ENCODE measurements at regions of chr3 and their contacts with region 1.

Region 1: DNA sequence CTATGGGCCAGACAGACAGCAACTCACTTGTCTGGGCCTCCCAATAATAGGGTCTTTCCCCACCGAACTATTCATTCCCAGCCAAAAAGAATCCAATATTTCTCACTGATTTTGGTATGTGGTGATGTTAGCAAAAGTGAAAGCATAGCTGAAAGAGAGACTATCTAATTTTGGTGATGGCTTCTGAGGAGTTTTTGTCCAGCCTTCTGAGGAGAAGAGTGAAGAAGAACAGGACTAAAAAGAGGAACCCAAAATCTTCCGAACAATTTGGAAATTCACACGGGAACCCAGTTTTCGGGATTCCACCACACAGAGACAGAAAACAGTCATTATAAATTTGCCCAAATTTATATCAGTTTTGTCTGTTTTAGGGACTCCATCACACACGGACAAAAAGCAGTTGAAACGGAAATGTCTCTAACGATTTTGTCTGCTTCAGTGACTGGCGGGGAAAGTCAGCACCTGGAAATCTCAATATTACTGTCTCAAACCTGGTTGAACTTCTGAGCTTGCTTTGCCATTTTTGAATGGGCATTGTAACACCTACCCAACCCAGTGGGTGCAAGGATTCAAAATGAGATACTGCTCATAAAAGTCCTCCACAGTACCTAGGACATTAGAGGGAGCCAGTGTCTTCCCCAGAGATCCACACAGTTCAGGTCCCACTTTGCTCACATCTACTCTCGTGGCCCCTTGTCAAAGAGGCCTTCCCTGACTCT is 9.1 kb downstream of the CD80 start:
- DNase-seq: no peak

Region 2: DNA sequence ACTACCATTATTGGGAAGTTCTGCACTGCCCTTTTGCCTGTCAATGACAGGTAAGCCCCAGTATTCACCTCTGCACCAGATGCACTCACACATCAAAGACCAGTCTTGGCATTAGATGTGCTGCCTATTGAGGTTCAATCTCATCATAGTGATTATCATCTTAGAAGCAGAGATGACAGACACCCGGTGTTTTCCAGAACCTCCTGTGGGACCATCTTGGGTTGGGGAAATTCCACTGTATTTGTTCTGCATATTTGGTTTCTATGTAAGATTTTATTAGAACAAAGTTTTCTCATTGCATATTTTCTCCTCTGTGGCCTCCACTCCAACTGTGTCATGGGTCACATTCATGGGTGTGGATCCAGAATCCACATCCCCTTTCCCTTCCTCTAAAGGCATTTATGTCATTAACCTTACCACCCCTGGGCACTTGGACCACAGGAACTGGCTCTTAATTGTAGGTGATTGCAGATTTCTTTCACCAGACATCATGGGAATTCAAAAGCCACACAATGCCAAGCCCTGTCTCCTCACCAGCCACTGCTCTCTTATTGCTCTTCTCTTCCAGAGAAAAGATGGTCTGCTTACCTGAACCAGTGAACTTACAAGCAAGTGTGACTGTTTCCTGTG is 78.6 kb after region 1 on chr3:
- intact Hi-C with region 1: loop called (anchors 5 kb)
- DNase-seq: no peak

Region 3: DNA sequence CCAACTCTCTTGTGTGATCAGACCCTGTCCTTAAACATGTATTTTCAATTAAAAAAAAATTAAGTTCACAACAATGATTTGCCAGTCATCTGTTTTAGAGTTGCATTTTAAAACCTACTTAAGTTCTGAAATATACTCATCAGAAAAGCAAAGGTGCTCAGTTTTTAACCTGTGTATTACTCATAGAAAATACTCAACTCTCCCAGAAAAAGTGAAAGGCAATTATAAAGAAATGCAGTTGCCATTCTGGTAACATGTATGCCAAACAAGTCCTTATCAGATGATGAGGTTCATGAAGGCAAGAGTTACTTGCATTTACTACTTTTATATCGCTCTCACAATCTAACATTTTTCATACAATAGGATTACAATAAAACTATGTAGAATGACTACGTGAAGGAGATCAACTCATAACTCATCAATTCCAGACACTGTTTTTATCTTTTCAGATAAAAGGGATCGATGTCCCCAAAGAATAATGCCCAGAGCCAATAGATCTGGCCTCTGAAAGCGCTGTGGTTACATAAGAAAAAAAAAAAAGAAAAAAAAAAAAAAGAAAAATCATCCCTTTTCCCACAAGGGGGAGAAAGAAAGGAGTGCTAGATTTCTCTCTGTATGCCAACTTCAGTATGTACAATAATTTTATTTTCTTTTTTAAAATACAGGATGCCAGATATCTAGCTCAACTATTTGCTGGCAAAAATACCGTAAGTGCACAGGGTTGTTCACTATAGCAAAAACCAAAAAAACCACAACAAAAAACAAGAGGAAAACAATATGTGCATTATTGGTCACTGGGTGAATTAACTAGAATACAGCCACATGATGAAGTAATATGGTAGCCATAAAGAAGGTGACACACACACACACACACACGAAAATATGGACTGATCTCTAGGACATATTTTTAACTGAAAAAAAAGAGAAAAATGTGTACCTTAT is 368.9 kb after region 1 on chr3:
- intact Hi-C with region 1: no loop called
- DNase-seq: no peak